ENCODE measurements at regions of chr1 and their contacts with region 1.

Region 1: DNA sequence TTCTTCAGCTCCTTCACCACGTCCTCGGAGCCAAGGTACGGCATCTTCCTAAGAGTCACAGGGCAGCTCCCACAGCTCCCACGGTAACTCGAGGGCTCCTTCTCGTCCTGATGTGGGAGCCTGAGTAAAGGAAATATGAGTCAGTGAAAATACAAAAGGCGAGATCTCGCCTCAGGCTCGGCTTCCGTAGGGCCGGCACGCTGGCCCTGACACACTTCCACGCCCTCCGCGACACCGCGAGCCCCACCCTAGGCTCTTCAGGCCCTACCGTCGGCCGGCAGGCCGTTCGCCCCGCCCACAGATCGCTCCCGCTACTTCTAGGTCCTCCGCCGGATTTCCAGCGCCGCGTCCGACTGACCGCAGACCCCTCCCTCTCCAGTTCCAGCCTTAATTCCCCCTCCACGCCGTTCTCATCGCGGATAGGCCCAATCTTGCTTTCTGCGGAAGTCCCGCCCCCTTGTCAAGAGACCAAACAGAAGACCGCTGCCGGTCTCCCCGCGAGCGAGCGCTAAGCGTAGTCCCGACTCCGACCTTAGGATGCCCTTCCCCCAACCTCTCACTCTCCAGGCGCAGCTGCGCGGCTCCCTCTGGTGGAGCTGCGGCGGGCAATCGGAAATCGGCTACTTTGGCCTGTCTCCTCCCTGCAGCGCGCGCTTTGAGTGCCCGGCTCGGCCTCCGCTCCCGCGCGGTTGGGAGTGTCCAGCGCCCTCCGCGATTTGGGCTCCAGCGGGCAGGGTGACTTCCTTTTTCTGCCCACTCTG is at the starts of genes AP4B1 and DCLRE1B:
- DNase-seq: peak; percentile 93 to 100 (median 95)
- ATAC-seq: peak; percentile 92
- H3K4me3 ChIP-seq: peak within 1 kb of the TSS; percentile 83 to 85
- H3K4me3 Mint-ChIP-seq: peak within 1 kb of the TSS; percentile 99
- H3K27ac ChIP-seq: peak within 1 kb of the TSS; percentile 92 to 96
- H3K27ac Mint-ChIP-seq: peak within 1 kb of the TSS; percentile 100
- H3K4me1 ChIP-seq: peaks cover 34% of the 10 kb centered on the region
- H3K4me1 Mint-ChIP-seq: peaks cover 62% of the 10 kb centered on the region
- H3K27me3 ChIP-seq: no peaks in the 10 kb centered on the region
- H3K27me3 Mint-ChIP-seq: no peaks in the 10 kb centered on the region
- CTCF ChIP-seq: peak; percentile 65
- total RNA-seq, gene AP4B1: 63.7 to 67.3 TPM
- total RNA-seq, gene DCLRE1B: 8.1 to 9.1 TPM

Region 2: GRCh38 chr1:113769601-113769970 is 135.3 kb before region 1 on chr1:
- CTCF ChIA-PET with region 1: no interaction called
- POLR2A ChIA-PET with region 1: no interaction called
- intact Hi-C with region 1: no loop called
- DNase-seq: no peak
- ATAC-seq: no peak
- H3K4me3 ChIP-seq: no peak overlapping the region
- H3K4me3 Mint-ChIP-seq: no peak overlapping the region
- H3K27ac ChIP-seq: no peak overlapping the region
- H3K27ac Mint-ChIP-seq: peak overlapping the region; percentile 66
- H3K4me1 ChIP-seq: peaks cover 3% of the 10 kb centered on the region
- H3K4me1 Mint-ChIP-seq: peaks cover 39% of the 10 kb centered on the region
- H3K27me3 ChIP-seq: no peaks in the 10 kb centered on the region
- H3K27me3 Mint-ChIP-seq: no peaks in the 10 kb centered on the region
- CTCF ChIP-seq: no peak

Region 3: GRCh38 chr1:113835642-113836307 is 69.1 kb before region 1 on chr1:
- CTCF ChIA-PET with region 1: interaction called, 54 read pairs
- POLR2A ChIA-PET with region 1: interaction called, 13 read pairs
- intact Hi-C with region 1: loop called (anchors 1 kb)
- DNase-seq: peak in 4 of 9 experiments; percentile 17 to 77 (median 54)
- ATAC-seq: no peak
- H3K4me3 ChIP-seq: no peak overlapping the region
- H3K4me3 Mint-ChIP-seq: no peak overlapping the region
- H3K27ac ChIP-seq: no peak overlapping the region
- H3K27ac Mint-ChIP-seq: no peak overlapping the region
- H3K4me1 ChIP-seq: no peaks in the 10 kb centered on the region
- H3K4me1 Mint-ChIP-seq: peaks cover 7% of the 10 kb centered on the region
- H3K27me3 ChIP-seq: no peaks in the 10 kb centered on the region
- H3K27me3 Mint-ChIP-seq: no peaks in the 10 kb centered on the region
- CTCF ChIP-seq: peak; percentile 86

Region 4: GRCh38 chr1:113871597-113872113 is 33.2 kb before region 1 on chr1 and contains the start of gene PTPN22:
- CTCF ChIA-PET with region 1: interaction called, 8 read pairs
- POLR2A ChIA-PET with region 1: interaction called, 13 read pairs
- intact Hi-C with region 1: loop called (anchors 1 kb)
- DNase-seq: peak; percentile 64 to 96 (median 80)
- ATAC-seq: peak; percentile 84
- H3K4me3 ChIP-seq: peak within 1 kb of the TSS; percentile 53 to 66
- H3K4me3 Mint-ChIP-seq: peak within 1 kb of the TSS; percentile 83
- H3K27ac ChIP-seq: peak within 1 kb of the TSS; percentile 79 to 82
- H3K27ac Mint-ChIP-seq: peak within 1 kb of the TSS; percentile 98
- H3K4me1 ChIP-seq: peaks cover 65% of the 10 kb centered on the region
- H3K4me1 Mint-ChIP-seq: peaks cover 81% of the 10 kb centered on the region
- H3K27me3 ChIP-seq: no peaks in the 10 kb centered on the region
- H3K27me3 Mint-ChIP-seq: no peaks in the 10 kb centered on the region
- CTCF ChIP-seq: no peak
- total RNA-seq, gene PTPN22: 48.6 to 52.4 TPM

Region 5: DNA sequence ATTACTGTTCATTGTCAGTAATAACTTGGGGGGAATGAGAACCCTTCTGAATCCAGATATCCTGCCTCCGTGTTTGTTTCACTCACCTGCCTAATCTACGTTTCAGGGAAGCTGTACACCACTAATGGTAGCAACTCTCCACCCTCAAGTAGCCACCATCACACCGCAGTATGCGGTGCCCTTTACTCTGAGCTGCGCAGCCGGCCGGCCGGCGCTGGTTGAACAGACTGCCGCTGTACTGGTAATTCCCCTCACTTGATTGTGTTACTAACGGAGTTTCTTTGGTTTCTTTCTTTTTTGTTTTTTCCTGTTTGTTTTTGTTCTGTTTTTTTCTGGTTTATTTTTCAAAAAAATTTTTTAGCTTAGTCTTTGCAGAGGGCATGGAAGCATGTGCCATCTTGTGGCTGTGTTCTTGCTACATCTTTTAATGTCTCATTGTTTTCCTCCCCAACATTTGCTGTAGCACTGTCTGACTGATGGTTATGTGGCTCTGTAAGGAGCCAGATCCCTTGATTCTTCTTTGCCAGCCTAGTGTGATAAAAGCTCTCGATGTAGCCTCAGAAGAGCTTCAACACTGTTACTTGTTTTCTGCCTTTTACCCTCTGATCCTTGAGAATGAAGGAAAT is 58.5 kb after region 1 on chr1:
- CTCF ChIA-PET with region 1: interaction called, 10 read pairs
- POLR2A ChIA-PET with region 1: interaction called, 3 read pairs
- intact Hi-C with region 1: loop called in 1 of 2 experiments (anchors 1 kb)
- DNase-seq: peak in 2 of 9 experiments; percentile 28 to 59
- ATAC-seq: peak; percentile 61
- H3K4me3 ChIP-seq: no peak overlapping the region
- H3K4me3 Mint-ChIP-seq: no peak overlapping the region
- H3K27ac ChIP-seq: no peak overlapping the region
- H3K27ac Mint-ChIP-seq: peak overlapping the region; percentile 57
- H3K4me1 ChIP-seq: no peaks in the 10 kb centered on the region
- H3K4me1 Mint-ChIP-seq: peaks cover 38% of the 10 kb centered on the region
- H3K27me3 ChIP-seq: no peaks in the 10 kb centered on the region
- H3K27me3 Mint-ChIP-seq: no peaks in the 10 kb centered on the region
- CTCF ChIP-seq: no peak